Psoas muscle (tissue), 8 donors: ENCODE measurements at regions of chr13 and their contacts with region 1.

Region 1: DNA sequence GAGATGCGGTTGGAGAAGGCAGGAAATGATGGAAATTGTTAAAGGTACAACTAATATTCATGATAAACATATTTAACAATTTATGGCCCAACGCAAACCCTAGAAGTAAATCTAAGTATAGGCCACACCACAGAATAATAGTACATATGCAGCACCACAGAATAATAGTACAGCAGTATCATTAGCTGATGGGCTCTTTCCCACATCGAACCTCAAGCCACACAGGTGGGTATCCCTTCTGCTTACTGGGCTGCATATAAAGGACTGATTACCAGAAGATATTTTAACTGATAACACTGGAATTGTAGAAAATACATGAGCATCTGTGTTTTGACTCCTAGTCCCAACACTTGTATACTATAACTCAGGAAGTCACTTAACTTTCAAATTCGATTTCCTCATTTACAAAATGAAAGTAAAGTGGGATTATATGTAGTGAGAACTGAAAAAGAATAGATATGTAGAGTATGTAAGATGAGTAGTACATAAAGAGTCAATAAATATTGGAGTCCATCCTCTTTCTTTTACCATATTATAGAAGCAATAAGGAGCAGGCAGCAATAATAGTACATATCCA is 91.5 kb downstream of the TSC22D1 start:
- DNase-seq: no peak
- ATAC-seq: no peak
- H3K4me3 ChIP-seq: peak overlapping the region; percentile 11
- H3K27ac ChIP-seq: no peak overlapping the region
- H3K4me1 ChIP-seq: peaks cover 33% of the 10 kb centered on the region
- H3K27me3 ChIP-seq: no peaks in the 10 kb centered on the region
- CTCF ChIP-seq: no peak

Region 2: GRCh38 chr13:44529426-44529825 is 44.8 kb after region 1 on chr13:
- intact Hi-C with region 1: loop called in 1 of 2 experiments (anchors 5 kb)
- DNase-seq: no peak
- ATAC-seq: no peak
- H3K4me3 ChIP-seq: no peak overlapping the region
- H3K27ac ChIP-seq: no peak overlapping the region
- H3K4me1 ChIP-seq: peaks cover 6% of the 10 kb centered on the region
- H3K27me3 ChIP-seq: no peaks in the 10 kb centered on the region
- CTCF ChIP-seq: no peak

Region 3: DNA sequence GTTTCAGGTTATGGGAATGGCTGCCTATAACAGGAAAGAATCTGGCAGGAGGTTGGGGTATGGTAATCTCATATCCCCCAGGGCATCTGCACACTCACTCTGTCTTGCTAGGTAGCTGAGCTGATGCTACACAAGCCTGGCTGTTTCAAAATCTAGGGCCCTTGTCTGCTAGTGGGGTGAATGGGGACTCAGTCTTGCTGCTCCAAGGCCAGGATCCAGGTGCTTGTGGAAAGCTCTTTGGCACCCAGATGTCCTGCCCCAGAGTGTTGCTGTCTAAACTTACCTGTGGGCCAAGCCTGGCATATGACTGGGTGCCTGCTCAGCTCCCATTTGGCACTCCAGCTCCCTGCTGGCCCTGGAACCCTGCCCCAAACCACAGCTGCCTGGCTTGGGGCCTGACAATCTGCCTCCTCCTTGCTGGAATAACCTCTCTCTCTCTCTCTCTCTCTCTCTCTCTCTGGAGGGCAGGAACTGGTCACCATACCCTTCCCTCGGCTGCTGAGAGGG is 249.6 kb after region 1 on chr13:
- intact Hi-C with region 1: loop called in 1 of 2 experiments (anchors 10 kb)
- DNase-seq: peak; percentile 82 to 93
- ATAC-seq: peak; percentile 86 to 90 (median 88)
- H3K4me3 ChIP-seq: peak overlapping the region; percentile 19
- H3K27ac ChIP-seq: peak overlapping the region; percentile 83
- H3K4me1 ChIP-seq: peaks cover 18% of the 10 kb centered on the region
- H3K27me3 ChIP-seq: no peaks in the 10 kb centered on the region
- CTCF ChIP-seq: no peak

Region 4: GRCh38 chr13:44879463-44880058 is 394.9 kb after region 1 on chr13:
- intact Hi-C with region 1: loop called (anchors 5 to 10 kb)
- DNase-seq: no peak
- ATAC-seq: peak; percentile 61 to 76 (median 68)
- H3K4me3 ChIP-seq: no peak overlapping the region
- H3K27ac ChIP-seq: no peak overlapping the region
- H3K4me1 ChIP-seq: no peaks in the 10 kb centered on the region
- H3K27me3 ChIP-seq: no peaks in the 10 kb centered on the region
- CTCF ChIP-seq: peak; percentile 43